ENCODE measurements at regions of chr6 and their contacts with region 1.

Region 1: GRCh38 chr6:75149240-75149639 is 56.6 kb downstream of the COL12A1 start:
- DNase-seq: no peak
- ATAC-seq: no peak
- H3K4me3 ChIP-seq: no peak overlapping the region
- H3K4me3 Mint-ChIP-seq: no peak overlapping the region
- H3K27ac ChIP-seq: no peak overlapping the region
- H3K27ac Mint-ChIP-seq: no peak overlapping the region
- H3K4me1 ChIP-seq: no peaks in the 10 kb centered on the region
- H3K4me1 Mint-ChIP-seq: no peaks in the 10 kb centered on the region
- H3K27me3 ChIP-seq: no peaks in the 10 kb centered on the region
- H3K27me3 Mint-ChIP-seq: peaks cover 10 to 12% of the 10 kb centered on the region in 2 donors

Region 2: GRCh38 chr6:75084872-75085381 is 64.3 kb before region 1 on chr6:
- CTCF ChIA-PET with region 1: no interaction called
- POLR2A ChIA-PET with region 1: no interaction called
- DNase-seq: no peak
- ATAC-seq: no peak
- H3K4me3 ChIP-seq: no peak overlapping the region
- H3K4me3 Mint-ChIP-seq: no peak overlapping the region
- H3K27ac ChIP-seq: no peak overlapping the region
- H3K27ac Mint-ChIP-seq: no peak overlapping the region
- H3K4me1 ChIP-seq: peaks cover 0 to 3% of the 10 kb centered on the region in 2 experiments
- H3K4me1 Mint-ChIP-seq: peaks cover 0 to 2% (median 0%) of the 10 kb centered on the region in 3 donors
- H3K27me3 ChIP-seq: peaks cover 6 to 8% of the 10 kb centered on the region in 2 experiments
- H3K27me3 Mint-ChIP-seq: peaks cover 15 to 31% of the 10 kb centered on the region in 2 donors

Region 3: GRCh38 chr6:75601304-75602245 is 452.3 kb after region 1 on chr6 and contains the start of gene SENP6:
- CTCF ChIA-PET with region 1: no interaction called
- POLR2A ChIA-PET with region 1: interaction called in 1 of 2 experiments, 11 read pairs
- DNase-seq: peak; percentile 38 to 85 (median 69)
- ATAC-seq: peak; percentile 79 to 87 (median 84)
- H3K4me3 ChIP-seq: peak within 1 kb of the TSS; percentile 88 to 93
- H3K4me3 Mint-ChIP-seq: peak within 1 kb of the TSS; percentile 95 to 99 (median 98)
- H3K27ac ChIP-seq: peak within 1 kb of the TSS; percentile 95
- H3K27ac Mint-ChIP-seq: peak within 1 kb of the TSS; percentile 98
- H3K4me1 ChIP-seq: peaks cover 15 to 26% of the 10 kb centered on the region in 2 experiments
- H3K4me1 Mint-ChIP-seq: peaks cover 66 to 75% (median 73%) of the 10 kb centered on the region in 3 donors
- H3K27me3 ChIP-seq: no peaks in the 10 kb centered on the region
- H3K27me3 Mint-ChIP-seq: no peaks in the 10 kb centered on the region
- total RNA-seq, gene SENP6: 103 to 119 (median 111) TPM

Region 4: GRCh38 chr6:75631859-75632635 is 482.8 kb after region 1 on chr6:
- CTCF ChIA-PET with region 1: no interaction called
- POLR2A ChIA-PET with region 1: no interaction called
- DNase-seq: no peak
- ATAC-seq: no peak
- H3K4me3 ChIP-seq: no peak overlapping the region
- H3K4me3 Mint-ChIP-seq: no peak overlapping the region
- H3K27ac ChIP-seq: no peak overlapping the region
- H3K27ac Mint-ChIP-seq: no peak overlapping the region
- H3K4me1 ChIP-seq: peaks cover 0 to 2% of the 10 kb centered on the region in 2 experiments
- H3K4me1 Mint-ChIP-seq: peaks cover 17 to 22% (median 18%) of the 10 kb centered on the region in 3 donors
- H3K27me3 ChIP-seq: no peaks in the 10 kb centered on the region
- H3K27me3 Mint-ChIP-seq: no peaks in the 10 kb centered on the region

Measured in T-cell (primary cell).